Lower leg skin (tissue), 4 donors: ENCODE measurements at regions of chr3 and their contacts with region 1.

Region 1: DNA sequence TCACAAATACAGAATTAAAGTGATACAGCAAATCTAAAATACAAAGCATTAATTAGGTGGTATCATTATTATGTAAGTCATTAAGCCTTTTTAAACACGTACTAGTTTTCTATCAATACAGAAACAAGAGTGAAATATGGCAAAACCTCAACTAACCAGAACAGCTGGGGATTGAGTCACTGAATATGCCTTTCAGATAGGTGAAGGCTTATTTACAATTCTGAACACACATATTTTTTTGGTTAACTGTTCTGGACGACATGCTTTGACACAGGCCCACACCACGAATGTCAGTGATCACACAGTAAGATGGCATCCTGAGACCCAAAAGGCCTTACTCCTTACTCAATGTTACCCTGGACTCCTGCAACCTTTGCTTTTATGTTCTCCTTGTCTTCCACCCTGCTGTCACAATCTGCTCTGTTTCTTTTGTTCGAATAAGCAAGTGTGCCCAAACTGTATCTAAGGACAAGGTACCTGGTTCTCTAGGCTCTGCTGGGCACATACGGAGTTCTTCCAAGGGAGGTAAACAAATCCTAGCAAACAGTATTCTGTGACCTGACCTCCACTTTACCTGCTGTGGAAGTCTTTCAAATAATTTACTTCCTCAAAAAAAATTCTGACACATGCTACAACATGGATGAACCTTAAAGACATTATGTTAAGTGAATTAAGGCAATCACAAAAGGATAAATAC is 7.0 kb downstream of the SFMBT1 start:
- DNase-seq: no peak
- H3K4me3 ChIP-seq: no peak overlapping the region
- CTCF ChIP-seq: no peak
- POLR2A ChIP-seq: no peak

Region 2: GRCh38 chr3:53049987-53050386 is 11.2 kb after region 1 on chr3:
- intact Hi-C with region 1: loop called (anchors 1 kb)
- DNase-seq: no peak
- H3K4me3 ChIP-seq: no peak overlapping the region
- CTCF ChIP-seq: no peak
- POLR2A ChIP-seq: no peak